Spleen (tissue), 13 donors: ENCODE measurements at regions of chr3 and their contacts with region 1.

Region 1: GRCh38 chr3:143674100-143674968 is 173.9 kb downstream of the SLC9A9 start:
- DNase-seq: peak; percentile 91
- H3K4me3 ChIP-seq: peak overlapping the region in 1 of 8 donors; percentile 28
- H3K27ac ChIP-seq: peak overlapping the region in 7 of 8 donors; percentile 14 to 75 (median 68)
- H3K4me1 ChIP-seq: peaks cover 3 to 56% (median 32%) of the 10 kb centered on the region in 6 donors
- H3K27me3 ChIP-seq: no peaks in the 10 kb centered on the region
- CTCF ChIP-seq: peak; percentile 77 to 93 (median 91)
- POLR2A ChIP-seq: no peak

Region 2: DNA sequence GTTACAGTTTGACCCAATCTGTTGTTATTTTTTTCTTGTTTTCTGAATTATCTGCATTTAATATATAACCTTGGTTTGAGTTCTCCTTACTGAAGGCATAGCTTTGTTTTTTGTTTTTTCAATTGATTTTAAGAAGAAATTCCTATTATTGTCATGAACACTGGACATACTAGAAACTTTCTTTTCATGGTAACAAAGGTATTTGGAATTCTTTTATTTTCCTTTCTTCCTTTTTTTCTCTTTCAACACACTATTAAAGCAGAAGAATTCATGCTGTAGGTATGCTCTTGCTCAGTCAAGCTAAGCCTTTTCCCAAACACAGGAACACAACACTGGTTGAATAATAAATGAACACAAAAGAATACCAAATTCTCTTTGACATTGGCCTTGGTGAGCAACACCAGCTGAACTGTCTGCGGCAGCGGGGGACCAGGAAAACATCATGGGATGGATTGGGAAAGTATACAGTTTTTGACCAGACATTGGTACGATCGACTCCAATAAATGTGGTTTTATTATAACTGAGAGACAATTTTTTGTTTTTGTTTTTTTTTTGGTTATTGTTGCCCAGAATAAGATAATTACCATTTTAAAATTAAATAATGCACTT is 649.9 kb before region 1 on chr3:
- intact Hi-C with region 1: loop called (anchors 10 kb)
- DNase-seq: no peak
- H3K4me3 ChIP-seq: no peak overlapping the region
- H3K27ac ChIP-seq: no peak overlapping the region
- H3K4me1 ChIP-seq: no peaks in the 10 kb centered on the region
- H3K27me3 ChIP-seq: no peaks in the 10 kb centered on the region
- CTCF ChIP-seq: no peak
- POLR2A ChIP-seq: no peak

Region 3: DNA sequence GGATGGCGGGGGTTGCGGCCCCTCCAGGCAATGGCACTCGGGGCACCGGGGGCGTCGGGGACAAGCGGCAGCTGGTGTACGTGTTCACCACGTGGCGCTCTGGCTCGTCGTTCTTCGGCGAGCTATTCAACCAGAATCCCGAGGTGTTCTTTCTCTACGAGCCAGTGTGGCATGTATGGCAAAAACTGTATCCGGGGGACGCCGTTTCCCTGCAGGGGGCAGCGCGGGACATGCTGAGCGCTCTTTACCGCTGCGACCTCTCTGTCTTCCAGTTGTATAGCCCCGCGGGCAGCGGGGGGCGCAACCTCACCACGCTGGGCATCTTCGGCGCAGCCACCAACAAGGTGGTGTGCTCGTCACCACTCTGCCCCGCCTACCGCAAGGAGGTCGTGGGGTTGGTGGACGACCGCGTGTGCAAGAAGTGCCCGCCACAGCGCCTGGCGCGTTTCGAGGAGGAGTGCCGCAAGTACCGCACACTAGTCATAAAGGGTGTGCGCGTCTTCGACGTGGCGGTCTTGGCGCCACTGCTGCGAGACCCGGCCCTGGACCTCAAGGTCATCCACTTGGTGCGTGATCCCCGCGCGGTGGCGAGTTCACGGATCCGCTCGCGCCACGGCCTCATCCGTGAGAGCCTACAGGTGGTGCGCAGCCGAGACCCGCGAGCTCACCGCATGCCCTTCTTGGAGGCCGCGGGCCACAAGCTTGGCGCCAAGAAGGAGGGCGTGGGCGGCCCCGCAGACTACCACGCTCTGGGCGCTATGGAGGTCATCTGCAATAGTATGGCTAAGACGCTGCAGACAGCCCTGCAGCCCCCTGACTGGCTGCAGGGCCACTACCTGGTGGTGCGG is 552.9 kb before region 1 on chr3:
- intact Hi-C with region 1: loop called (anchors 10 kb)
- DNase-seq: peak; percentile 90
- H3K4me3 ChIP-seq: peak overlapping the region; percentile 63 to 97 (median 92)
- H3K27ac ChIP-seq: peak overlapping the region in 7 of 8 donors; percentile 89 to 96 (median 93)
- H3K4me1 ChIP-seq: peaks cover 6 to 74% (median 59%) of the 10 kb centered on the region in 6 donors
- H3K27me3 ChIP-seq: peaks cover 0 to 36% (median 7%) of the 10 kb centered on the region in 7 donors
- CTCF ChIP-seq: peak; percentile 25 to 70 (median 48)
- POLR2A ChIP-seq: no peak